ENCODE measurements at regions of chr4 and their contacts with region 1.

Region 1: DNA sequence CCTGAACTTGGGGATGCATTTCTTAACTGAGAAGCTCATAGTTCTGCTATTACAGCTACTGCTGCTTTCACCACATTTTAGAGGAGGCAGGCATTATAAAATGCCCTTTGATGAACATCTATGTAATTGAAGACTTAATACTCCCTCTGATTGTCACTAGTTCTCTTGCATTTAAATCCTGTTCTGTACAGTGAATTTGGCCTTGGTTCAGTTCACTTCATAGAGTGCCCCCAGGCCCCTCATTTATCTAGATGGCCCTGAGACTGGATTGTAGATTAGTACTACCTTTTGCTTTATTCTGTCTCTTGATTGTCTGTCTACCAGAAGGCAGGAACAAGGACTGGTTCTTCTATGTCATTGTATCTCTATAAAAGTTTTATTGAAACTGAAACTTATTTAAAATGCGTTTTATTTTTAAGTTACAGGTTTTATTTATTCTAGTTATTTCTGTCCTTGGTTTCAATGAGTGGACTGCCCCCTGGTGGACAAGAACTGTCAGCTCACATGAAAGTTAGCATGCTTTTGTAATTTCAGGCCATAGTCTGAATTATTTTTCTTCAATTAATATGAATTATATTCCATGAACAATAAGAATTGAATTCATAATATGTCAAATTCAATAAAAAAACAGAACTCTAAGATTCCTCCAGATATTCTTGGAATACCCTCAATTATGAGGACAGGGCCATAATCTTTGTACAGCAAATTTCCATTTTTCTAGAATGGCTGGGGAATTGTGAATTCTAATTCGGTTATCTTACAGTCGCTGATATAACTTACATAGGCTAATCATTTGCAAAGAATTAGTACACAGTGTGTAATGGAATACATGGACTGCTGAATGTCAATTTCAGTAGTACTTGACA is 47.2 kb upstream of the TMEM33 start:
- DNase-seq: peak; percentile 45 to 66 (median 51)
- ATAC-seq: no peak
- H3K4me3 ChIP-seq: no peak overlapping the region
- H3K27ac ChIP-seq: no peak overlapping the region
- H3K4me1 ChIP-seq: no peaks in the 10 kb centered on the region
- H3K27me3 ChIP-seq: no peaks in the 10 kb centered on the region
- CTCF ChIP-seq: peak; percentile 70 to 99 (median 77)
- POLR2A ChIP-seq: no peak

Region 2: DNA sequence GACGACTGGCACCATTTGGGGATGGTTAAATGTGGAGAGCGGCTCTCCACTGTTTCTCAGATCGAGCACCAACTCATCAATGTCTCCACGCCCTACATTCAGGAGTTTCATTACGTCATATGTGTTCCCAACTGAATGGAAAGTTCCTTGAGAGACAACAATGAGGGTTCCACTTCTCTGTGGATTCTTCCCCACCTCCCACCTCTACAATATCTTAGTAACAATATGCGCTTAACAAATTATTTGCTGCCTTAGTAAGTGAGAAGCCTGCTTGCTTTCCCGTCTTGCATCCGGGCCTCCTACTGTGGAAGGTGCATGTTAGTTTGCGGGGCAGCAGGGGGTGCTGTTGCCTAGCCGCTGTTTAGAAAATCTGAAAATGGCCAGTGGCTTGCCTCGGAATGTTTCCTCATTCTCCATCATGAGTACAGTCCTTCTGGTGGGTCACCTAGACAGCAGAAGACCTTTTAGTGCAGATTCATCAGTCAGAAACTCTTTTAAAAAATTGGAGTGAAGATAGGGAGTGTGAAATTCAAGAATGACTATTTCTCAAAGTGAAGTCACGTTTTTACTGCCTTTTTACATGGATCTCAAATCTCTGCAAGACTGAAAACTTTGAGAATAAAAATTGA is 195.2 kb before region 1 on chr4:
- intact Hi-C with region 1: loop called (anchors 5 kb)
- DNase-seq: peak; percentile 54 to 62 (median 61)
- ATAC-seq: peak; percentile 79
- H3K4me3 ChIP-seq: no peak overlapping the region
- H3K27ac ChIP-seq: no peak overlapping the region
- H3K4me1 ChIP-seq: peaks cover 3% of the 10 kb centered on the region
- H3K27me3 ChIP-seq: no peaks in the 10 kb centered on the region
- CTCF ChIP-seq: peak; percentile 78 to 89 (median 86)
- POLR2A ChIP-seq: no peak

Measured in body of pancreas (tissue), 4 donors.